ENCODE measurements at regions of chr12 and their contacts with region 1.

Region 1: DNA sequence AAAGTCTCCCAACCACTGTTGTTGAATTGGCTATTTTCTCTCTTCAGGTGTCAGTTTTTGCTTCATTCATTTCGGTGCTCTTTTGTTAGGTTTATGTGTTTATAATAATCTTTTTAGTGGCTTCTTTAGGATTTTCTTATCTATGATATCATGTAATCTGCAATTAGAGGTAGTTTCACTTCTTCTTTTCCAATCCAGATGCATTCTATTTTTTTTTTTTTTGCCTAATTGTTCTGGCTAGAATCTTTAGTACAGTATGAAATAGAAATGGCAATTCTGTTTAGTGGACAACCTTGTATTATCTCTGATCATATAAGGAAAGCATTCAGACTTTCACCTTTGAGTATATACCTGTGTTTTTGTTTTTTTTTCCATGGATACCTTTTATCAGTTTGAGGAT is 17.4 kb downstream of the CNOT2 start:
- DNase-seq: peak; percentile 65
- H3K4me3 ChIP-seq: peak overlapping the region; percentile 37
- H3K27ac ChIP-seq: peak overlapping the region; percentile 70
- H3K4me1 ChIP-seq: peaks cover 87% of the 10 kb centered on the region
- CTCF ChIP-seq: no peak

Region 2: DNA sequence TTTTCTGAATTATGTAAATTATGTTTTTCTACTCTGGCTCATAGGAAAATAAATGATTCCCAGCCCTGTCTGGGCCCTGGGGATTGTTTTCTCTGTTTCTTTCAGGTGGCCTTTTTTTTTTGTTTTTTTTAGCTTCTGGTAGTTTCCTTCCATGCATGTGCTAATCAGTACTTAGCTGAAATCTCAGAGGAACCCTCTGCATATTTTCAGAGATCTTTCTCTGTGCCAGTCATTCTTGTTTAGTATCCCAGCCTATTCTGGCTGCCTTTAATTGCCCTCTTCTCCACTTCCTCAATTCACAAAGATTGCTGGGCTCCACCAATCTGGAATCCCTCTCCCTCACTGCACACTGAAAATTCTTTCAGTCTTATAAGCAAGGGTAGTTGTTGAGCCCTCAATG is 29.5 kb after region 1 on chr12:
- CTCF ChIA-PET with region 1: no interaction called
- POLR2A ChIA-PET with region 1: no interaction called
- intact Hi-C with region 1: no loop called
- DNase-seq: no peak
- H3K4me3 ChIP-seq: no peak overlapping the region
- H3K27ac ChIP-seq: no peak overlapping the region
- H3K4me1 ChIP-seq: peaks cover 15% of the 10 kb centered on the region
- CTCF ChIP-seq: no peak

Region 3: DNA sequence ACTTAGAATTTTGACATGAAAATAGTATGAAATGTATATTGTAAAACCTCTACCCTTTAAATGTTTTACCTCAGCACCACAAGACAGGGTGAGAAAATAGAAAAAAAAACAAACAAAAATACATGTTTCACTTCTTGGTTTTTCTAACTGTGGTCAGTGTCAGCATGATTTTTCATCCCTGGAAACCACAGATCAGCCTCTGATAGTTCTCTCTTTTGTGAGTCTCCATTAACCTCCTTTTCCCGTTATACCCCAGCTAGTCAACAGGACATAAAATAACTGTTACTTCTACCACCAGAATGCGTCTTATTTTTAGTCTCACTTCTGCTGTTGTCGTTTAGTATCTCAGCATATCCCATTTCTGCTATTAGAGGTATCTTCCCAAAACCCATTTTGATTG is 57.1 kb after region 1 on chr12:
- CTCF ChIA-PET with region 1: no interaction called
- POLR2A ChIA-PET with region 1: no interaction called
- intact Hi-C with region 1: loop called (anchors 5 kb)
- DNase-seq: peak; percentile 57
- H3K4me3 ChIP-seq: peak overlapping the region; percentile 16
- H3K27ac ChIP-seq: peak overlapping the region; percentile 50
- H3K4me1 ChIP-seq: peaks cover 34% of the 10 kb centered on the region
- CTCF ChIP-seq: no peak

Region 4: GRCh38 chr12:70365648-70366518 is 105.2 kb after region 1 on chr12 and contains the start of gene KCNMB4:
- CTCF ChIA-PET with region 1: no interaction called
- POLR2A ChIA-PET with region 1: no interaction called
- intact Hi-C with region 1: loop called (anchors 5 kb)
- DNase-seq: peak; percentile 82
- H3K4me3 ChIP-seq: peak within 1 kb of the TSS; percentile 74
- H3K27ac ChIP-seq: peak within 1 kb of the TSS; percentile 50
- H3K4me1 ChIP-seq: peaks cover 47% of the 10 kb centered on the region
- CTCF ChIP-seq: 0 out of 2 replicates have a peak, but pooled peaks have one; percentile 20
- total RNA-seq, gene KCNMB4: 3.0 and 5.8 TPM in 2 replicates